Psoas muscle (tissue), 8 donors: ENCODE measurements at regions of chr3 and their contacts with region 1.

Region 1: DNA sequence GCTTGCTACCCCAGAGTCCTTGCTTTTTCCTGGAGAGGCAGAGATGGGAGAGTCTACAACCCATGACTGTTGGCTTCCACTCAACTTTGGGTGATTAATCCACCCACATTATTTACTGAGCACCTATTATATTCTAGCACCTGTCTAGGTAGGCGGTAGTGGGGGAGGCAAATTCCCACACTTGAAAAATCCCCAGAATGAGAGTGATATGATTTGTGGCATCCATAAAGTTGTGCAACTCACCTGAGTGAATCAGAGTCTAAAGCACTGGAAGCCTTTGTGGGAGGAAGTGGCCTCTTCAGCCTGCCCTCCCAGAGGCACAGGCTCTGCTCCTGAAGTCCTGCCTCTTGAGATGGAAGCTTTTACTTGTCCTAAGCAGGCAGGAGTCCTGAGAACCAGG is 40.4 kb upstream of the CTNNB1 start:
- DNase-seq: no peak
- ATAC-seq: no peak
- H3K4me3 ChIP-seq: no peak overlapping the region
- H3K27ac ChIP-seq: no peak overlapping the region
- H3K4me1 ChIP-seq: no peaks in the 10 kb centered on the region
- H3K27me3 ChIP-seq: no peaks in the 10 kb centered on the region
- CTCF ChIP-seq: no peak

Region 2: DNA sequence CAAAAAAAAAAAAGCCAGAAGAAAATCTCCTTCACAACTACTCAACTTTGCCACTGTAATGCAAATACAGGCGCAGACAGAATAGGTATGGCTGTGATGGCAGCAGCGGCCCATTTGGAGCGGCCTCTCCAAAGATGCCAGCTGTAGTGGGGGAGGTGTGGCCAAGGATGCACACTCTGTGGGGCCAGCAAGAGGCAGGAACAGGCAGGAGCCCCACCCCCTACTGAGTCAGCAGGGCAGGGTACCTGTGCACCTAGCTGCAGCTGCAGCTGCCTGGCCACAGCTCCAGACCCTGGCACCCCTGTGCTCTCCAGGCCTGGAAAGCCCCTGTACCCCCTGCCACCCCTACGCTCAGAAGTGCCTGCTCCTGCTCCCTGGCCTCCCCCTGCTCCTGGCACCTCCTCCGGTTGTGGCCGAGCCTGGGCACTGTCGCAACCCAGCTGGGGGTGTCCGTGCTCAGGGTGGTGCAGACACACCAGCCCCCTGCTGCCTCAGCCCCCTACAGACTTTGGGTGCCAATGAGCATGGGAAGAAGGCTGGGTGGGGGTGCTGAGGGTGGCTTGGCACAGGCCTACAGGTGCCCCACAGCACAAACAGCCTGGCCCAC is 490.3 kb after region 1 on chr3:
- intact Hi-C with region 1: loop called in 1 of 2 experiments (anchors 5 kb)
- DNase-seq: no peak
- ATAC-seq: no peak
- H3K4me3 ChIP-seq: no peak overlapping the region
- H3K27ac ChIP-seq: no peak overlapping the region
- H3K4me1 ChIP-seq: no peaks in the 10 kb centered on the region
- H3K27me3 ChIP-seq: no peaks in the 10 kb centered on the region
- CTCF ChIP-seq: no peak